ENCODE measurements at regions of chr3 and their contacts with region 1.

Region 1: GRCh38 chr3:124887177-124887931 is at the start of gene ITGB5:
- DNase-seq: peak in 2 of 5 donors; percentile 5 to 11
- H3K4me3 ChIP-seq: peak within 1 kb of the TSS in 1 of 2 donors; percentile 49
- H3K4me3 Mint-ChIP-seq: peak within 1 kb of the TSS; percentile 51 to 80 (median 74)
- H3K27ac ChIP-seq: no peak within 1 kb of the TSS
- H3K27ac Mint-ChIP-seq: peak within 1 kb of the TSS in 1 of 7 donors; percentile 27
- H3K4me1 ChIP-seq: peaks cover 5% of the 10 kb centered on the region
- H3K4me1 Mint-ChIP-seq: peaks cover 5 to 11% (median 6%) of the 10 kb centered on the region in 4 donors
- H3K27me3 ChIP-seq: peaks cover 22% of the 10 kb centered on the region
- H3K27me3 Mint-ChIP-seq: peaks cover 20 to 22% of the 10 kb centered on the region in 2 donors
- total RNA-seq, gene ITGB5: 3.4 to 5.4 TPM

Region 2: GRCh38 chr3:124097362-124098131 is 789.8 kb before region 1 on chr3:
- CTCF ChIA-PET with region 1: no interaction called
- POLR2A ChIA-PET with region 1: no interaction called
- intact Hi-C with region 1: no loop called
- DNase-seq: no peak
- H3K4me3 ChIP-seq: no peak overlapping the region
- H3K4me3 Mint-ChIP-seq: no peak overlapping the region
- H3K27ac ChIP-seq: no peak overlapping the region
- H3K27ac Mint-ChIP-seq: no peak overlapping the region
- H3K4me1 ChIP-seq: no peaks in the 10 kb centered on the region
- H3K4me1 Mint-ChIP-seq: no peaks in the 10 kb centered on the region
- H3K27me3 ChIP-seq: no peaks in the 10 kb centered on the region
- H3K27me3 Mint-ChIP-seq: peaks cover 14 to 19% of the 10 kb centered on the region in 2 donors

Region 3: DNA sequence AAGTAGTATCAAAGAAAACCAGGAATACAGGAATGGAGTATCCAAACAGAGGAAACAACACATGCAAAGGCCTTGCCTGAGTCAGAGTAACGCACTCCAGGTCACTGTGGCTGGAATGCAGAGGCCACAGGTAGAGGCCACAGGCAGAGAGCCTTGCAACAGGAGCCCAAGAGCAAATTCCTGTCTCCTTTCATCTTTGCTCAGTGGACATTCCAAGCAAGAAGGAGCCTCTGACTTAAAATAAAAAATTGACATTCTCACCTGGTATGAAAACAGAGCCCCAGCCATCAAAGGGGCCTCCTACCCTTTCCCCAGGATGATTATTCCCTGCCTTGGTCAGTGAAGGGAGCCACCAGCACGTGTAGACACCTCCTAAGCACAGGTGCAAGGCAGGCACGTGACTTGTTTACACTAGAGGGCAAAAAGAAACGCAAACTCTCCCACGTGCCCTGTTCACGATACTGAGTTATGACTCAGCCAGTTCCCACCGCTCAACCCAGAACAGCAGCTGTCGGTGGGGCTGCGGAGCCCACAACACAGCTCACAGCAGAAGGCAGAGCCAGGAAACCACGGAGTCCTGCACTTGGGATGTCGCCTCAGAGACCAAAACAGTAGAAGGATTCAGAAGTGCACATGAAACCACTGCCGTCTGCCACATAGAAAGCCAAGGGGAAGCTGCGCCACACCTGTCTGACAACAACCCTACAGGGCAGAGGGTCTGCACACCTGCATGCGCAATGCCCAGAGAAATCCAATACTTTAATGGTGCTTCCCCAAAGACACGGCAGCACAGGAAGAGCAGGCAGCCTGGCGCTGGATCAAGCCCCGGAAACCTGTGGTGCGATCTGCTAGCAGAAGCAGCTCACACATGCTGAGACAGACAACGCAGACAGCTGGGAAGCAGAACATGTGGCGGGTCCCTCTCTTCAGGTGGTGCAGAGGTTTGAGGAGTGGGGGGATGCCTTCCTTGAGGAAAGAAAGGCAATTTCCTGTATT is 52.3 kb before region 1 on chr3:
- CTCF ChIA-PET with region 1: no interaction called
- POLR2A ChIA-PET with region 1: no interaction called
- intact Hi-C with region 1: loop called (anchors 1 kb)
- DNase-seq: peak; percentile 30 to 80 (median 49)
- H3K4me3 ChIP-seq: peak overlapping the region; percentile 38 to 46
- H3K4me3 Mint-ChIP-seq: peak overlapping the region; percentile 81 to 92 (median 87)
- H3K27ac ChIP-seq: peak overlapping the region; percentile 25
- H3K27ac Mint-ChIP-seq: peak overlapping the region; percentile 61 to 93 (median 85)
- H3K4me1 ChIP-seq: peaks cover 34% of the 10 kb centered on the region
- H3K4me1 Mint-ChIP-seq: peaks cover 13 to 35% (median 24%) of the 10 kb centered on the region in 4 donors
- H3K27me3 ChIP-seq: no peaks in the 10 kb centered on the region
- H3K27me3 Mint-ChIP-seq: peaks cover 4 to 9% of the 10 kb centered on the region in 2 donors

Region 4: GRCh38 chr3:125098611-125099291 is 211.4 kb after region 1 on chr3:
- CTCF ChIA-PET with region 1: no interaction called
- POLR2A ChIA-PET with region 1: no interaction called
- intact Hi-C with region 1: no loop called
- DNase-seq: no peak
- H3K4me3 ChIP-seq: no peak overlapping the region
- H3K4me3 Mint-ChIP-seq: no peak overlapping the region
- H3K27ac ChIP-seq: no peak overlapping the region
- H3K27ac Mint-ChIP-seq: no peak overlapping the region
- H3K4me1 ChIP-seq: no peaks in the 10 kb centered on the region
- H3K4me1 Mint-ChIP-seq: no peaks in the 10 kb centered on the region
- H3K27me3 ChIP-seq: peaks cover 5% of the 10 kb centered on the region
- H3K27me3 Mint-ChIP-seq: peaks cover 5 to 6% of the 10 kb centered on the region in 2 donors